Dorsolateral prefrontal cortex (tissue), 120 donors: ENCODE measurements at regions of chr6 and their contacts with region 1.

Region 1: GRCh38 chr6:31680840-31681671 is at the start of gene LY6G5C:
- DNase-seq: peak; percentile 64 to 86 (median 84)
- H3K4me3 ChIP-seq: peak within 1 kb of the TSS; percentile 43 to 84 (median 66)
- H3K27ac ChIP-seq: peak within 1 kb of the TSS in 56 of 59 donors; percentile 17 to 91 (median 72)
- H3K27me3 ChIP-seq: no peaks in the 10 kb centered on the region
- CTCF ChIP-seq: peak; percentile 47 to 86 (median 75)
- total RNA-seq, gene LY6G5C: 1.3 to 14.3 (median 6.4) TPM

Region 2: GRCh38 chr6:31834434-31835198 is 153.6 kb after region 1 on chr6:
- intact Hi-C with region 1: loop called in 1 of 2 experiments (anchors 5 kb)
- DNase-seq: peak; percentile 77 to 89 (median 86)
- H3K4me3 ChIP-seq: peak overlapping the region; percentile 72 to 100 (median 94)
- H3K27ac ChIP-seq: peak overlapping the region; percentile 79 to 99 (median 97)
- H3K27me3 ChIP-seq: no peaks in the 10 kb centered on the region
- CTCF ChIP-seq: peak in 26 of 56 donors; percentile 5 to 48 (median 22)

Region 3: DNA sequence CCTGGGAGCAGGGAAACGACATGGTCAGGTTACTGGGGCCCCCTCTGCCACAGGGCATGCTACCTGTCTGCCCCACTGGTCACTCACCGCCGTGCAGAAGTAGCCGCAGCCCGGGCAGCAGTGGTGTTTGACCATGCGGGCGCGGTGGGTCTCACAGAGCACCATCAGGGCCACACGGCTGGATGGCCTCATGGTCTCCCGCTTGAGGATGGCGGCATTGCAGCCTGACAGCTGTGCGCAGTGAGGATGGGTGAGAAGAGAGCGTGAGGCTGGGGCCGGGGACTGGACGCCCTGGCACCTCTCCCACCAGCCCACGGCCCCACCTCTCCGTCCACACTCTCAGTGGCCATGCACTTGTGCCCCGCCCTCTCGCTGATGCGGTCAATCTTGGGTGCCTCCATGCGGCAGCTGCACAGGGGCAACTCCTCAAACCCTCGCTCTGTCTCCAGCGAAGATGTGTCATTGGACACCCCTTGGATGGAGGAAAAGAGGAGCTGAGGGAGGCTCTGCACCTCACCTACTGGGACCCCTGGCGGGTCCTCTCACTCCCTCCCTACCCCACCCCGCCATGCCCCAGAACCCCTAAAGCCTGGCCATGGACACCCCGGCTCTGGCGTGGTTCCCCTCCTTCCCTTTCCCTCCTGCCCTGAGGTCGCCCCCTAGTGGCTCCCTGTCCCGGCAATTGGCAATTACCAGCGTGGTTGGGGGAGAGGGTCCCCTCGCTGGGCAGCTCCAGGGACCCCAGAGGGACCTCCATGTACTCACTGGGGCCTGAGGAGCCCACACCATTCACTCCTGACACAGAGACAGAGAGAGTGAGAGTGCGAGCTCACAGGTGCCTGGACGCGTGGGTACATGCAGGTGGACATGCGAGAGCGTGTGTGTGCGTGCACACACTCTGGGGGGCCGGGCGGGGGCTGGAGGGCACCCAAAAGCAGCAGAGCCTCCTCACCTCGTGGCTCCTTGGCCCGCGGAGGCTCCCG is 207.5 kb after region 1 on chr6:
- intact Hi-C with region 1: loop called in 1 of 2 experiments (anchors 5 kb)
- DNase-seq: peak in 1 of 10 donors; percentile 10
- H3K4me3 ChIP-seq: no peak overlapping the region
- H3K27ac ChIP-seq: no peak overlapping the region
- H3K27me3 ChIP-seq: no peaks in the 10 kb centered on the region
- CTCF ChIP-seq: peak; percentile 31 to 74 (median 56)

Region 4: DNA sequence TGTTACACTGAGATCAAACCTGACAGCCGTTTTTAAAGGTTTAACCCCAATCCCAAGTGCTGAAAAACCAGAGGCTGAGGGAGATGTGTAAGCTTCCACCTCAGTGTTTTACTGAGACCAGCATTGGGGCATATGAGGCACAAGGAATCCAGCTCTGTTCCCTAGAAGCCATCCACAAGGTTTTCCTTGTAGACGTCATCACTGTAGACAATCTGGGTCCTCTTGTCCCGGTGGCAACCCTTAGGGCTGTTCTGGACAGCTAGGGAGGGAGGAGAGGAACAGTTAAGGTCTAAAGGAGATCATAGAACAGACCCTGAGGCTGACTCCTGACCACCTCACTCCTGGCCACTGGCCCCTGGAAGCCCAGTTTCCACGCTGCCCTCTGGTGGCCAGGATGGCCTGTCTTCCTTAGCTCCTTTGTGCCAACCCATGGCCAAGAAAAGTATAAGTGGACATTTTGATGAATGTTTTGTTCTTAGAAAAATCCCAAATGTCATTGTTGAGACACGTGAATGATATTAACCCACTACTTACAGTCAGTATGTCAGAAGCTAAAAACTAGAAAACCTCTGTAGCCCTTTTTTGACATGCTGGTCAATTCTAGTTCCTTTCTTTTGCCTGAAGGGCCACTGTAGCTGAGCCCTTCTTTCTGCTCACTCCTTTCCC is 271.2 kb after region 1 on chr6:
- intact Hi-C with region 1: loop called (anchors 2 to 5 kb)
- DNase-seq: peak in 8 of 10 donors; percentile 38 to 72 (median 50)
- H3K4me3 ChIP-seq: no peak overlapping the region
- H3K27ac ChIP-seq: peak overlapping the region in 9 of 59 donors; percentile 1 to 60 (median 32)
- H3K27me3 ChIP-seq: no peaks in the 10 kb centered on the region
- CTCF ChIP-seq: peak; percentile 41 to 82 (median 70)